Adrenal gland (tissue), 19 donors: ENCODE measurements at regions of chr10 and their contacts with region 1.

Region 1: DNA sequence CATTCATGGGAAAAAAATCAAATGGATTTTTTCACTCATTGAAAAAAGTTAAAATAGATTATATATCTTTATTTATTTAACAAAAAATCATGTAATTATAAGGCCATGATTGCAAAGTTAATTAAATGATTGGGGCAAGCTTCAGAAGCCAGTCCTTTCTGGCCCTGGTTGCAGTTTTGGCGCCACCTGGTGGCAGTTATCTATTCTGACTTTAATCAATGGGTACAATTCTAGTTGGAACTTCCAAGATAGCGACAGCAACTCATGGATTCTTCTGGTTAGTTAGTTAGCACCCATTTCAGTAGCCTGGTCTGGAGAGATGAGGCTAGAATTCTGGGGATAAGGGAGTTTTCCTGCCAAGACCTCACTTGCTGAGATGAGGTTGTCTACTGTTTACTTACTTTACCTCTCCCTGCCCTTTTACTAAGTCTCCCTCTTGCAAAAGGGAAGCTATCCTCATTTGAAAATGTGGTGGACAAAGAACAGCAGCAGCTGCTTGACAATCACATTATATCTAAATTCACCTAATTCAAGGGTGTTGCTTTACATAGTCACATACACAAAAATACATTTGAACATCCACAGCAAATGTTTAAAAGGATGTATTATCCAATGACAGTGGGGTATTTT is 42.3 kb downstream of the NOC3L start:
- DNase-seq: peak; percentile 49 to 86 (median 75)
- H3K4me3 ChIP-seq: no peak overlapping the region
- H3K27ac ChIP-seq: no peak overlapping the region
- H3K4me1 ChIP-seq: peaks cover 0 to 4% of the 10 kb centered on the region in 2 donors
- H3K27me3 ChIP-seq: no peaks in the 10 kb centered on the region
- CTCF ChIP-seq: peak; percentile 72 to 94 (median 83)
- POLR2A ChIP-seq: no peak

Region 2: GRCh38 chr10:93224005-93224779 is 1096.2 kb before region 1 on chr10:
- intact Hi-C with region 1: no loop called
- DNase-seq: no peak
- H3K4me3 ChIP-seq: no peak overlapping the region
- H3K27ac ChIP-seq: no peak overlapping the region
- H3K4me1 ChIP-seq: no peaks in the 10 kb centered on the region
- H3K27me3 ChIP-seq: no peaks in the 10 kb centered on the region
- CTCF ChIP-seq: no peak
- POLR2A ChIP-seq: no peak

Region 3: GRCh38 chr10:93916257-93917063 is 403.9 kb before region 1 on chr10:
- intact Hi-C with region 1: loop called (anchors 5 to 10 kb)
- DNase-seq: no peak
- H3K4me3 ChIP-seq: no peak overlapping the region
- H3K27ac ChIP-seq: no peak overlapping the region
- H3K4me1 ChIP-seq: no peaks in the 10 kb centered on the region
- H3K27me3 ChIP-seq: no peaks in the 10 kb centered on the region
- CTCF ChIP-seq: peak; percentile 7 to 64 (median 56)
- POLR2A ChIP-seq: no peak

Region 4: DNA sequence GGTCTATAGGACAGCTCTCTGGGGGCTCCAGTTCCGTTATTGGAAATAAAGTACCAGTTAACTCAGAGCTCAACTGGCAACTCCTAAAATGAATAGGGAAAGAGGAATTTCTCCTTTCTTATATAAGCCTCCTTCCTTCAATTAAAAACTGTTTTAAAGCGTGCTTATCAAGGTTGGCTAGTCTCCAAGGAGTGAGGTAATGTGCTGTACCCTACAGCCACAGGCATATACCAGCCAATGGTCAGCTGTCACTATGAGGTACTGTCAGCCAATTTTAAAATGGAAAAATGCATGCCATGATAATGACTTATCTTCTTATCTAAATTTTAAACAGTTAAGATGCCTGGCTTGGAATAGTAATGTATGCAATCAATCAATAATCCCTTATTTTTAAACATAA is 250.5 kb before region 1 on chr10:
- intact Hi-C with region 1: loop called in 1 of 2 experiments (anchors 5 kb)
- DNase-seq: peak in 1 of 7 donors; percentile 10
- H3K4me3 ChIP-seq: no peak overlapping the region
- H3K27ac ChIP-seq: no peak overlapping the region
- H3K4me1 ChIP-seq: peaks cover 0 to 6% of the 10 kb centered on the region in 2 donors
- H3K27me3 ChIP-seq: no peaks in the 10 kb centered on the region
- CTCF ChIP-seq: no peak
- POLR2A ChIP-seq: no peak